HepG2 (cell line): ENCODE measurements at regions of chr12 and their contacts with region 1.

Region 1: GRCh38 chr12:87848248-87848868 is 180.8 kb downstream of the C12orf50 start:
- DNase-seq: peak; percentile 25
- ATAC-seq: peak; percentile 47; the same call in 1 of the 3 replicates
- H3K4me3 ChIP-seq: no peak overlapping the region
- H3K27ac ChIP-seq: no peak overlapping the region
- H3K4me1 ChIP-seq: no peaks in the 10 kb centered on the region
- H3K27me3 ChIP-seq: no peaks in the 10 kb centered on the region
- CTCF ChIP-seq: peak; percentile 69
- EP300 ChIP-seq: no peak
- POLR2A ChIP-seq: no peak
- RAD21 ChIP-seq: 0 out of 2 replicates have a peak, but pooled peaks have one; percentile 27

Region 2: DNA sequence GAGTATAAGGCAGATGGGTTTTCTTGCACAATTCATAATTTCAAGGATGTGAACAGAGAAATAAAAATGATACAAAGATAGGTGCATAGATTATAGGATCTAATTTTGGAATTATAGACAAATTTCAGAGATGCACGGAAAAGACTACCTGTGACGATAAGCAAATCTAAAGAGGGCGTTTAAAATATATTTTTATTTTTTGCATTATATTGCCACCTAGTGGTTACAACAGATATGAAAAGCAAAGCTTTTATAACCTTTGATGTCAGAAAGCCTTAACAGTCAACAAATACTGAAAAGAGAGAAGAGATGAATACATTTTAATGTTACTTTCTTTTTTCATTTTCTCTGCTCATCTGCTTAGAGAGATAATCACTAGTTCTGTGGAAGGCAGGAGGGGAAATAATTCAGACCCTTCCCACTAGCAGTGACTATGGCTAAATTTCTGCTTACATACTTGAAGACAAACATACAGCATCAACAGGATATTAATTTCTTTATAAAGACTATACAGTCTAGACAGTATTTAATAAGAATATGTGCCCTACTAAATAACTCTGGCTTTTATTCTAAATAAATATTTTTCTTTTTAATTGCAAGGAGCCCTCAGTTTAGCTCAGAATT is 1927.9 kb before region 1 on chr12:
- CTCF ChIA-PET with region 1: no interaction called
- POLR2A ChIA-PET with region 1: no interaction called
- in situ Hi-C with region 1: no loop called
- intact Hi-C with region 1: loop called (anchors 5 kb)
- DNase-seq: peak; percentile 12
- ATAC-seq: no peak
- H3K4me3 ChIP-seq: no peak overlapping the region
- H3K27ac ChIP-seq: no peak overlapping the region
- H3K4me1 ChIP-seq: no peaks in the 10 kb centered on the region
- H3K27me3 ChIP-seq: no peaks in the 10 kb centered on the region
- CTCF ChIP-seq: peak; percentile 46
- EP300 ChIP-seq: no peak
- POLR2A ChIP-seq: no peak
- RAD21 ChIP-seq: no peak

Region 3: GRCh38 chr12:86264451-86265342 is 1583.7 kb before region 1 on chr12:
- CTCF ChIA-PET with region 1: no interaction called
- POLR2A ChIA-PET with region 1: no interaction called
- in situ Hi-C with region 1: no loop called
- intact Hi-C with region 1: loop called (anchors 10 kb)
- DNase-seq: no peak
- ATAC-seq: peak; percentile 75
- H3K4me3 ChIP-seq: peak overlapping the region in 1 of 3 experiments; percentile 40; a peak in 1 of 6 replicates
- H3K27ac ChIP-seq: no peak overlapping the region
- H3K4me1 ChIP-seq: no peaks in the 10 kb centered on the region
- H3K27me3 ChIP-seq: no peaks in the 10 kb centered on the region
- CTCF ChIP-seq: no peak
- EP300 ChIP-seq: no peak
- POLR2A ChIP-seq: no peak
- RAD21 ChIP-seq: no peak

Region 4: DNA sequence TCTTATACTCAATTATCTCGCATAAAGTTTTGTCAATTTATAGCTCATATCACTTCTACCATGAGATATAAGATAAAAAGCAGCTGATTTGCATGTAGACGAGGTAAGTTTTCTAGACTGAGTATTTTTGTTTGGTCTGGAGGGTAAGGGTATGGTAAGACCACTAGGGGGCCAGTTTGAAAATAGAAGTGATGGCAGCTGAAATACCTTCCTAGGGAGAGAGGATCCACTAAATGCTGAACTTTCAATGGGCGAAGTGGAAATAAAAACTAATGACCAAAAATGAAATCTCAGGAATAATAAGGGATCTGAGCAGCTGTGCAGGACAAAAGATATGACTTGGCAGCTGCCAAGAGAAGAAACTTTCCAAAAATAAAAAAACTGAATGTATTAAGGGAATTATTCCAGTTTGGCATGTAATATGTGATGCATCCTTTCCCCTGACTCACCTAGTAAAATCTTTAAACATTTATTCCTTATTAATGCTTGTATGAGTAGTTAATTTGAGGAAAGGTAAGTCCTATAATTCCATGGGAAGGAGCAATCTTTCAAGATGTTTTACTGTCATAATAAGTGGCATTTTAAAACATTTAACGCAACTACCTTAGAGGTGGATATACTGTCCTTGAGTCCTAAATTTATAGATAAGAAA is 573.6 kb before region 1 on chr12:
- CTCF ChIA-PET with region 1: interaction called, 4 read pairs
- POLR2A ChIA-PET with region 1: no interaction called
- in situ Hi-C with region 1: no loop called
- intact Hi-C with region 1: loop called (anchors 1 kb)
- DNase-seq: no peak
- ATAC-seq: peak; percentile 43; the same call in 1 of the 3 replicates
- H3K4me3 ChIP-seq: no peak overlapping the region
- H3K27ac ChIP-seq: no peak overlapping the region
- H3K4me1 ChIP-seq: no peaks in the 10 kb centered on the region
- H3K27me3 ChIP-seq: no peaks in the 10 kb centered on the region; a peak in 1 of 5 replicates
- CTCF ChIP-seq: no peak
- EP300 ChIP-seq: no peak
- POLR2A ChIP-seq: no peak
- RAD21 ChIP-seq: no peak

Region 5: DNA sequence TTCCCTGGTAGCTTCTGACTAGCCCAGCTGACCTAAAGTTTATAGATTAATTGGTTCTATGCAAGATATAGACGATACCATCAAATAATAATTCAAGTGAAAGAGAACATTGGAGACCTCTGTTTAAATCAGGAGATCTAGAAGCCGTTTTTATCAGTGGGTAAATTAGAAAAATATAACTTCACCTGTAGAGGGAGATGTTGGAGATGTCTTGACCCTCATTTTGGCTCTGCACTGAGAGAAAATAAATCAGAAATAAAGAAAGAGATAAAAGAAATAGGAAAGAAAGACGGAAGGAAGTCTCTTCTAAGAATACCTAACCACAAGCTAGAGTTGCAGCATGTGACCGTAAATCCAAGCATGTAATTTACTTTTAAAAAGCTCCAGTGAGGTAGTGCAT is 503.7 kb before region 1 on chr12:
- CTCF ChIA-PET with region 1: no interaction called
- POLR2A ChIA-PET with region 1: no interaction called
- in situ Hi-C with region 1: no loop called
- intact Hi-C with region 1: loop called (anchors 10 kb)
- DNase-seq: no peak
- ATAC-seq: no peak
- H3K4me3 ChIP-seq: no peak overlapping the region
- H3K27ac ChIP-seq: no peak overlapping the region
- H3K4me1 ChIP-seq: no peaks in the 10 kb centered on the region
- H3K27me3 ChIP-seq: no peaks in the 10 kb centered on the region
- CTCF ChIP-seq: no peak
- EP300 ChIP-seq: no peak
- POLR2A ChIP-seq: no peak
- RAD21 ChIP-seq: no peak

Region 6: DNA sequence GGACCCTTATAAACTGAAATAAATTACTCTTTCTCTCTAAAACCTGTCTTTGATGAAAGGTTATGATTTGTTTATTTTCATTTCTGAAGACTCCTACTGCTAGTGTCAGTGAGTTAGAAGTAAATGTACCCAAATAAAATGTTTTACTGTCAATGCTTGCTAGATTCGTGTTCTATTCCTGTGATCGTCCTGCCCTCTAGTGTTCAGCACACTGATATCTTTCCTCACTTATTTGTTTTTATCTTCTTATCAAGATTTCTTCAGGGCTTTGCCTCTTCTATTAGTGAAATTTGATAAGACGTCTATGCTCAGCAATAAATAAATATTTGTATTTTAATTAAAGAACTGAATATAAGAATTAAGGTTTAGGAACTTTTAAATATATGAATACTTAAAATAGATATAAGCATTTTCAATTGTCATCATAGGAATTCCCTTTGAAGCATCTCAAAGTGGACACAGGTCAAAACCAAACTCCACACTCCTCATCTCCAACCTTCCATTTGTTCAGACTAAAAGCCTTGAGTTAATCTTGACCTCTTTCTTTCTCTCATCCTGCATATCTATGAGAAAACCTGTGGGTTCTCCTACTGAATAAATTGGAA is 105.0 kb after region 1 on chr12:
- CTCF ChIA-PET with region 1: no interaction called
- POLR2A ChIA-PET with region 1: no interaction called
- in situ Hi-C with region 1: no loop called
- intact Hi-C with region 1: no loop called
- DNase-seq: peak; percentile 15
- ATAC-seq: peak; percentile 74
- H3K4me3 ChIP-seq: no peak overlapping the region
- H3K27ac ChIP-seq: no peak overlapping the region
- H3K4me1 ChIP-seq: peaks cover 18% of the 10 kb centered on the region
- H3K27me3 ChIP-seq: no peaks in the 10 kb centered on the region
- CTCF ChIP-seq: peak; percentile 59
- EP300 ChIP-seq: no peak
- POLR2A ChIP-seq: no peak
- RAD21 ChIP-seq: no peak

Region 7: DNA sequence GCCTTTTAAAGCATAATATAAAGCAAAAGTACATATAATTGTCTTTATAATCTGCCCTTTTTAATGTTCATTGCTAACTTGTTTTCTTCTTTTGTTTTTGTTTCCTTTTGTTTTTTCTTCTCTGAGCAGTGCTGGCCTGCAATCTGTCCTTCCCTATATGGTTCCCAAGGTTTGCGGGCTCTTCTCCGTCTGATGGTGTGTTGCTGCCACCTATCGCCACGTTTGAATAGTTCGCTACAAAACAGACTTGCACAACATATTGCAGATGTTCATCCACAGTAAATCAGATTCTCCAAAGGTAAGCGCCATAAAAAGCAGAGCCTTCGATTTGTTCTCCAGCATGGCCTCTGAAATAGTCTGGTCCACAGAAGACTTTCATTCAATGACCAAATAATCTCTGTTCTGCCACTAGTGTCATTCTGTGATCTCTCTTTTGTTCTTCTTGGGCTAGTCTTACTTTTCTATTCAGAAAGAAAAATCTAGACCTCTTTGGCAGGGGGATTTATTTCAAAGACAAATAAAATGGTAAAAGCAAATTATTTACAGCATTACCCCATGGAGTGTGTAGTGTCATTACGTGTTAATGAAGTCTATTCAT is 147.3 kb after region 1 on chr12:
- CTCF ChIA-PET with region 1: no interaction called
- POLR2A ChIA-PET with region 1: no interaction called
- in situ Hi-C with region 1: no loop called
- intact Hi-C with region 1: loop called (anchors 1 kb)
- DNase-seq: peak; percentile 46
- ATAC-seq: peak; percentile 99
- H3K4me3 ChIP-seq: no peak overlapping the region
- H3K27ac ChIP-seq: no peak overlapping the region
- H3K4me1 ChIP-seq: no peaks in the 10 kb centered on the region
- H3K27me3 ChIP-seq: no peaks in the 10 kb centered on the region
- CTCF ChIP-seq: peak; percentile 85
- EP300 ChIP-seq: no peak
- POLR2A ChIP-seq: no peak
- RAD21 ChIP-seq: peak; percentile 64